ENCODE measurements at regions of chr9 and their contacts with region 1.

Region 1: GRCh38 chr9:109817846-109818472 is 38.0 kb downstream of the PALM2AKAP2 start:
- DNase-seq: peak; percentile 46
- ATAC-seq: no peak
- H3K4me3 Mint-ChIP-seq: no peak overlapping the region
- H3K27ac Mint-ChIP-seq: no peak overlapping the region
- H3K4me1 Mint-ChIP-seq: peaks cover under 1% of the 10 kb centered on the region
- H3K27me3 Mint-ChIP-seq: peaks cover 5% of the 10 kb centered on the region

Region 2: GRCh38 chr9:109574068-109574882 is 243.7 kb before region 1 on chr9:
- CTCF ChIA-PET with region 1: interaction called, 12 read pairs
- DNase-seq: no peak
- ATAC-seq: no peak
- H3K4me3 Mint-ChIP-seq: no peak overlapping the region
- H3K27ac Mint-ChIP-seq: no peak overlapping the region
- H3K4me1 Mint-ChIP-seq: no peaks in the 10 kb centered on the region
- H3K27me3 Mint-ChIP-seq: peaks cover 2% of the 10 kb centered on the region

Measured in activated CD8-positive, alpha-beta memory T cell treated with anti-CD3 and anti-CD28 coated beads, Interleukin-2, amount 10 ng/mL, durations not matched to agents 7 days and 5 days (primary cell).